Calu3 (cell line): ENCODE measurements at regions of chr19 and their contacts with region 1.

Region 1: DNA sequence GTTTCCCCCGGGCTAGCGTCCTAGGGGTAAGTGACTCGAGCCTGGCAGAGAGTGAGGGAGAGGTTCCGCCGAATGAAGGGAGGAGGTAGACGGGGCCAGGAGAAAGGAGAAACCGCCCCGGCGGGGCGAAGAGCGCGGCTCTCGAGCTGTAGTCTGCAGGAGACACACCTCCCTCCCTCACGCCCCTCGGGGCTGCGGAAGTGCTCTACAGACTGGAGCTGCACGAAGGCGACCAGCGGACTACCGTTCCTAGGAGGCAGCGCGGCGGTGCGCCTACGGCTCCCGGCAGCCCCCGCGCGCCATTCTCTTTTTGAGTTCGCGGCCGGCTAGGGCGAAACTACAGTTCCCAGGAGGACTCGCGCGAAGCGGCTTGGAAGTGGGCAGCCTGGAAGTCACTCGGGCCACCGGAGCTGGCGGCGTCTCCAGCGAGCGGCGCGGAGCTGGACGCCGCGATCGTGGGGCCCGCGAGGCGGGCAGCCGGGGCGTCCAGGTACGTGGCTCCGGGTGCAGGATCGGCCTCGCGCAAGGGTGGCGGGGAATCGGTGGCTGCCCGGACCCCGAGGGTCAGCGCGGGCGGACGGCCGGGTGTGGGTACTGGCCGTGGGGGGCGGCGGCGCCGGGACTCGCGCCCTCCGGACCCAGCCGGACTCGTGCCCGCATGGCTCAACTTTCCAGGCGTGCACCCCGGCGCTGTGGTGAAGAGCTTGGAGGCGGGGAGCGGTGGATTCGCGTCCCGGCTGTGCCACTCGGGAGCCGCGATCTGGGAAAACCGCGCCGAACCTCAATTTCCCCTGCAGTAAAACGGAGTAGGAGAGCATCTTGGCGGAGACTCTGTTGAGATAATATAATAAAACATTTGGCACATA is at the start of gene SIPA1L3:
- DNase-seq: peak; percentile 98
- H3K4me3 Mint-ChIP-seq: peak within 1 kb of the TSS; percentile 98
- H3K27ac Mint-ChIP-seq: peak within 1 kb of the TSS; percentile 87
- H3K4me1 Mint-ChIP-seq: peaks cover 22% of the 10 kb centered on the region
- H3K27me3 Mint-ChIP-seq: no peaks in the 10 kb centered on the region
- CTCF ChIP-seq: no peak
- total RNA-seq, gene SIPA1L3: 115 and 127 TPM in 2 replicates

Region 2: GRCh38 chr19:37979547-37980082 is 72.5 kb after region 1 on chr19:
- CTCF ChIA-PET with region 1: no interaction called
- intact Hi-C with region 1: loop called (anchors 5 kb)
- DNase-seq: peak; percentile 45
- H3K4me3 Mint-ChIP-seq: no peak overlapping the region
- H3K27ac Mint-ChIP-seq: no peak overlapping the region
- H3K4me1 Mint-ChIP-seq: peaks cover 27% of the 10 kb centered on the region
- H3K27me3 Mint-ChIP-seq: no peaks in the 10 kb centered on the region
- CTCF ChIP-seq: no peak

Region 3: GRCh38 chr19:38057959-38058710 is 151.0 kb after region 1 on chr19:
- CTCF ChIA-PET with region 1: interaction called, 17 read pairs
- intact Hi-C with region 1: no loop called
- DNase-seq: peak; percentile 38
- H3K4me3 Mint-ChIP-seq: no peak overlapping the region
- H3K27ac Mint-ChIP-seq: no peak overlapping the region
- H3K4me1 Mint-ChIP-seq: peaks cover 20% of the 10 kb centered on the region
- H3K27me3 Mint-ChIP-seq: no peaks in the 10 kb centered on the region
- CTCF ChIP-seq: no peak

Region 4: DNA sequence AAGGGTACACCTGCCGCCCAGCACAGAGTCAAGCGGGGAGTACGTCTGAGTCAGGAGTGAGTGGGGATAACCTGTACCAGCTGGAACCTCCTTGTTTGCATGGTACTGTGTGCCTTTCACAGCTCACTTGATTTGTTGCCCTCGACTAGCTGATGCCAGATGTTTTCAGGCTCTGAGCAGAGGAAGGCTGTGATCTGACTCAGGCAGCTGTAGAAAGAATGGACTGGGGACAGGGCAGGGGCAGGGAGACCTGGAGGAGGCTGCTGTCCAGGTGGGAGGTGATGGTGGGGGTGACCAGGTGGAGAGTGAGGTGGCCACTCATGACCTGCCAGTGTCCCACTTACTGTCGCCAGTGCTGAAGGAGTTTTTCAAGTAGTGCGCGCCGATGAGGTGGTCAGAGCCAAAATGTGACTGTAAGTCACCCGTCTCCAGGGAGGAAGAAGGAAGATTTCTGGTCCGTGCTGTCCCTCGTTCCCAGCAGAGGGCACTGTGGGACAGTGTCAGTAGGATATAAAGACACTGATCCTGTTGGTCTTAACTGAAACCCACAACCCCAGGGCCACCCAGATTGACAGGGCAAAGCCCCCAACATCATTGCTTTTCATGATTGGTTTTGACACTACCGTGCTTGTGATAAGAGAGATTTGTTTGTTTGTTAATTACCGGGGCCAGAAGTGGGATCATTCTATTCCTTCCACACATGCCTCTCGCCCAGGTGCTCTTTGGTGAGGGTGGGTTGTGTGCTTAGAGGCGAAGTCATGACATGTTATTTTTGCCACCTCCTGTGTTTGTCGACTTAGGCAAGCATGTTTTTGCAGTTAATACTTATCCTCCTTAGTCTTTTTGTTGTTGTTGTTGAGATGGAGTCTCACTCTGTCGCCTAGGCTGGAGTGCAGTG is 188.6 kb after region 1 on chr19:
- CTCF ChIA-PET with region 1: interaction called, 7 read pairs
- intact Hi-C with region 1: loop called (anchors 5 kb)
- DNase-seq: peak; percentile 72
- H3K4me3 Mint-ChIP-seq: no peak overlapping the region
- H3K27ac Mint-ChIP-seq: no peak overlapping the region
- H3K4me1 Mint-ChIP-seq: no peaks in the 10 kb centered on the region
- H3K27me3 Mint-ChIP-seq: no peaks in the 10 kb centered on the region
- CTCF ChIP-seq: peak; percentile 79